ENCODE measurements at regions of chr9 and their contacts with region 1.

Region 1: DNA sequence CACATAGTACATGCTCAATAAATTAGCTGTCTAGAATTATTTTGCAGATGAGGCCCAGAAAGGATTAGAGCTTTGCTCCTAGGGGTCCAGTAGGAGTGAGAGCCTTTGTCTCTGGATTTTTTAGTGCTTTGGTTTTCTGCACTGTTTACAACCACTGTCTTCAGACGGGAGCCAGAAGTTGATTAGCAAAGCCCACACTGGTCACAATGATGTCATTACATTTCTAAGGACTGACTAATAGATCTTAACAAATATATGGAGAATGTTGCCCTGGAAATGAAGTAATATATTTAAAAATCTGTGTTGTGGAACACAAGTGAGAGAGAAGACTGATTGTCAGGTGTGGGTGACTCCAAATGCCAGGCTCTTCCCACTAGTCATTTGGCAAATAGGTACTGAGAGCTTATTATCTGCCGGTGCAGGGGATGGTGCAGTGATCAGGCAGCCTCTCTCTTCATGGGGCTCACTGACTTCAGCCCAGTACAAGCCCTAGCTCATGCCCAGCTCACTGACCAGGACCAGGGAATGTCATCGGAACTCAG is 76.2 kb downstream of the COL15A1 start:
- DNase-seq: peak; percentile 35 to 62
- ATAC-seq: peak; percentile 79 to 84
- H3K4me3 ChIP-seq: no peak overlapping the region
- H3K27ac ChIP-seq: peak overlapping the region; percentile 70 to 75
- H3K4me1 ChIP-seq: peaks cover 19% of the 10 kb centered on the region
- CTCF ChIP-seq: no peak
- EP300 ChIP-seq: no peak; a peak in 2 of 5 replicates
- POLR2A ChIP-seq: no peak
- RAD21 ChIP-seq: no peak

Region 2: GRCh38 chr9:99055384-99055783 is 35.5 kb after region 1 on chr9:
- CTCF ChIA-PET with region 1: no interaction called
- POLR2A ChIA-PET with region 1: interaction called, 11 read pairs
- DNase-seq: peak in 1 of 2 experiments; percentile 16
- ATAC-seq: peak in 1 of 2 experiments; percentile 32; a peak in 3 of 6 replicates
- H3K4me3 ChIP-seq: no peak overlapping the region
- H3K27ac ChIP-seq: peak overlapping the region in 1 of 2 experiments; percentile 10; a peak in 1 of 6 replicates
- H3K4me1 ChIP-seq: peaks cover 16% of the 10 kb centered on the region
- CTCF ChIP-seq: no peak
- EP300 ChIP-seq: no peak
- POLR2A ChIP-seq: no peak
- RAD21 ChIP-seq: no peak

Region 3: GRCh38 chr9:99119976-99120655 is 100.3 kb after region 1 on chr9:
- CTCF ChIA-PET with region 1: no interaction called
- POLR2A ChIA-PET with region 1: no interaction called
- DNase-seq: no peak
- ATAC-seq: no peak
- H3K4me3 ChIP-seq: no peak overlapping the region
- H3K27ac ChIP-seq: no peak overlapping the region
- H3K4me1 ChIP-seq: peaks cover 7% of the 10 kb centered on the region; the same call in 1 of the 3 replicates
- CTCF ChIP-seq: no peak
- EP300 ChIP-seq: no peak
- POLR2A ChIP-seq: no peak
- RAD21 ChIP-seq: no peak

Region 4: GRCh38 chr9:99266255-99267023 is 246.6 kb after region 1 on chr9:
- CTCF ChIA-PET with region 1: no interaction called
- POLR2A ChIA-PET with region 1: no interaction called
- DNase-seq: peak; percentile 9 to 54
- ATAC-seq: peak; percentile 69 to 90
- H3K4me3 ChIP-seq: no peak overlapping the region
- H3K27ac ChIP-seq: no peak overlapping the region
- H3K4me1 ChIP-seq: no peaks in the 10 kb centered on the region
- CTCF ChIP-seq: peak; percentile 69
- EP300 ChIP-seq: no peak
- POLR2A ChIP-seq: no peak
- RAD21 ChIP-seq: peak; percentile 76 to 85

Measured in A549 (cell line).